Posterior vena cava (tissue), 2 donors: ENCODE measurements at regions of chr3 and their contacts with region 1.

Region 1: DNA sequence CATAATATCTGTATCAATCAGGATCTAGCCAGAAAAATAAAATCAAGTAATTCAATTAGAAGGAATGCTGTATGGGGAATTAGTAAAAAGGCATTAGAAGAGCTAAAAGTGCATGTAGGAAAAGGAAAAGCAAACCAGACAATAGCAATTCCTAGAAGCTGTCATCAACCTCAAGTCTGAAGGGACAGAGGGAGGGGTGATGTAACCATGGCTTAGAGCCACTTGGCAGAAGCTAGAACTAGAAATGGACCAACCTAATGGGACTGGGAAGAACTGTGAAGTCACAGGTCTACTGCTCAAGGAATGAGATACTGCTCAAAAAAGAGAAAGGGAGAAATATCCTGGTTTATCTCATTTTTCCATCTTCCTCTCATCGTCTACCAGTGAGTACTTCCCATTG is 590.7 kb upstream of the SGO1 start:
- DNase-seq: no peak

Region 2: DNA sequence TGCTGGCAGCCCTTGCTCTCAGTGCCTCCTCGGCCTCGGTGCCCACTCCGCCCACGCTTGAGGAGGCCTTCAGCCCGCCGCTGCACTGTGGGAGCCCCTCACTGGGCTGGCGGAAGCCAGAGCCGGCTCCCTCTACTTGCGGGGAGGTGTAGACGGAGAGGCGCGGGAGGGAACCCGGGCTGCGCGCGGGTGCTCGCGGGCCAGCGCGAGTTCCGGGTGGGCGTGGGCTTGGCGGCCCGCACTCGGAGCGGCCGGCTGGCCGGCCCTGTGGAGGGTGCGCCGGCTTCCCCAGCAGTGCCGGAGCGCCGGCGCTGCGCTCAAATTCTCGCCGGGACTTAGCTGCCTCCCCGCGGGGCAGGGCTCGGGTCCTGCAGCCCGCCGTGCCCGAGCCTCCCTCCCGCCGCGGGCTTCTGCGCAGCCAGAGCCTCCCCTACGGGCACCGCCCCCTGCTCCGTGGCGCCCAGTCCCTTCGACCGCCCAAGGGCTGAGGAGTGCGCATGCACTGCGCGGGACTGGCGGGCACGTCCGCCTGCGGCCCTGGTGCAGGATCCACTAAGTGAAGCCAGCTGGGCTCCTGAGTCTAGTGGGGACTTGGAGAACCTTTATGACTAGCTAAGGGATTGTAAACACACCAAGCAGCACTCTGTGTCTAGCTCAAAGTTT is 1074.1 kb before region 1 on chr3:
- intact Hi-C with region 1: loop called in 1 of 2 experiments (anchors 5 kb)
- DNase-seq: peak; percentile 81

Region 3: GRCh38 chr3:20701641-20702040 is 75.1 kb before region 1 on chr3:
- intact Hi-C with region 1: loop called in 1 of 2 experiments (anchors 2 kb)
- DNase-seq: no peak